T-cell (primary cell): ENCODE measurements at regions of chr17 and their contacts with region 1.

Region 1: DNA sequence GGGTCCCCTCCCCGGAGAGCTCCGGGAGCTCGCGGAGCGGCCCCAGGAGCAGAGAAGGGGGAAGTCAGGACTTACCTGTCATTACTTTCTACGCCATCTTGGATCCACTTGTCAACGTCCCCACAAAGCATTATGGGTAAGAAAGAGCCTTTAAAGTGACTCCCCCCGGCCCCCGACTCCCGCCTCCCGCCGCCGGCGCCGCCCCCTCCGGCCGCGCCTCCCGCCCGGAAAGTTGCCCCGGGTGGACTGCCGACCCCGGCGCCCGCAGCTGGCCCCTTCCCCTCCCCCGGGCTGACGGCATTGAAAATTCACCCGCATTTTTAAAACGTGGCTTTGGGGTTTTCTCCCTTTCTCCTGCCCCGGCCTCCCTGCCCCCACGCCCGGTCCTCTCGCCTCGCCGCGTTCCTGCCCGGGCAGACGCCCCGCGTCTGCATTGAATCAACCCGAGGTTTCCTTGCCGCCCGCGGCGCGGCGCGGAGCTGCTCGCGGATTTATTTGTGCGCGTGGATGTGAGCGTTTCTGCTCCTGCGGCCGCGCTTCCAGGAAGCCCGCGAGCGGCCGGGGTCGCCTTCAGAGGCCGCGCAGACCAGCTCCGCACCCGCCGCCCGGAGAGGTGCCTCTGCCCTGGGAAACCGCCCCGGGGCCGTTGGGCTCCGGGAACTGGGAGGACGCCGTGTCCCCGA is at the start of gene HELZ:
- DNase-seq: peak; percentile 25 to 85 (median 60)
- ATAC-seq: peak; percentile 72 to 83 (median 80)
- H3K4me3 ChIP-seq: peak within 1 kb of the TSS; percentile 70 to 81
- H3K4me3 Mint-ChIP-seq: peak within 1 kb of the TSS; percentile 88 to 92 (median 90)
- H3K27ac ChIP-seq: peak within 1 kb of the TSS; percentile 49
- H3K27ac Mint-ChIP-seq: peak within 1 kb of the TSS; percentile 86 to 88
- H3K4me1 ChIP-seq: peaks cover 22 to 41% of the 10 kb centered on the region in 2 experiments
- H3K4me1 Mint-ChIP-seq: peaks cover 47 to 59% (median 54%) of the 10 kb centered on the region in 3 donors
- H3K27me3 ChIP-seq: peaks cover 0 to 6% of the 10 kb centered on the region in 2 experiments
- H3K27me3 Mint-ChIP-seq: no peaks in the 10 kb centered on the region
- total RNA-seq, gene HELZ: 76.0 to 115 (median 91.6) TPM

Region 2: DNA sequence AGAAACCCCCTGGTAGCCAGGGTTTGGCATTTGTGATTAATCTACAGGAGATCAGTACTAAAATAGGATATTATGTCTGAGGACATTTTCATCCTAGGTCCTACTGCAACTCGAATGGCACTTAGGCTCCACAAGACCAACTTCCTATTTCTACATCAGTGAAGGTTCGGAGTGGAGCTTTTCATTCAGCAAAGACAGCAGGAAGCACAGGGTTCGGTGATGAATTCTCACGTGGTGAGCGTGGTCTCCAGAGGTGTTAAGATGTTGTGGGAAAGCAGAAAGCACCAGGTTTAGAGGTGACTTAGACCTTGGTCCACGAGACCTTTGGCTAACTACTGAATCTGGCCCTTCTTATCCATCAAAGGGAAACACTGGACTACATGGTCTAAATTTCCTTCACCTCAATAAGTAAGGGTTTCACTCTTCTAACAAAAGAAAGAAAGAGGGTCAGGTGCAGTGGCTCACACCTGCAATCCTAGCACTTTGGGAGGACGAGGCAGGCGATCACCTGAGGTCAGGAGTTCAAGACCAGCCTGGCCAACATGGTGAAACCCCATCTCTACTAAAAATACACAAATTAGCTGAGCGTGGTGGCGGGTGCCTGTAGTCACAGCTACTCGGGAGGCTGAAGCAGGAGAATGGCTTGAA is 13.7 kb after region 1 on chr17:
- CTCF ChIA-PET with region 1: interaction called in 1 of 2 experiments, 5 read pairs
- POLR2A ChIA-PET with region 1: interaction called in 1 of 2 experiments, 11 read pairs
- DNase-seq: peak in 26 of 35 experiments; percentile 10 to 69 (median 32)
- ATAC-seq: peak in 2 of 4 experiments; percentile 54 to 63
- H3K4me3 ChIP-seq: peak overlapping the region in 1 of 2 donors; percentile 4
- H3K4me3 Mint-ChIP-seq: peak overlapping the region; percentile 24 to 39 (median 37)
- H3K27ac ChIP-seq: no peak overlapping the region
- H3K27ac Mint-ChIP-seq: peak overlapping the region in 1 of 2 donors; percentile 65
- H3K4me1 ChIP-seq: peaks cover 8 to 32% of the 10 kb centered on the region in 2 experiments
- H3K4me1 Mint-ChIP-seq: peaks cover 20 to 30% (median 21%) of the 10 kb centered on the region in 3 donors
- H3K27me3 ChIP-seq: no peaks in the 10 kb centered on the region
- H3K27me3 Mint-ChIP-seq: no peaks in the 10 kb centered on the region